PC-9 (cell line): ENCODE measurements at regions of chr20 and their contacts with region 1.

Region 1: DNA sequence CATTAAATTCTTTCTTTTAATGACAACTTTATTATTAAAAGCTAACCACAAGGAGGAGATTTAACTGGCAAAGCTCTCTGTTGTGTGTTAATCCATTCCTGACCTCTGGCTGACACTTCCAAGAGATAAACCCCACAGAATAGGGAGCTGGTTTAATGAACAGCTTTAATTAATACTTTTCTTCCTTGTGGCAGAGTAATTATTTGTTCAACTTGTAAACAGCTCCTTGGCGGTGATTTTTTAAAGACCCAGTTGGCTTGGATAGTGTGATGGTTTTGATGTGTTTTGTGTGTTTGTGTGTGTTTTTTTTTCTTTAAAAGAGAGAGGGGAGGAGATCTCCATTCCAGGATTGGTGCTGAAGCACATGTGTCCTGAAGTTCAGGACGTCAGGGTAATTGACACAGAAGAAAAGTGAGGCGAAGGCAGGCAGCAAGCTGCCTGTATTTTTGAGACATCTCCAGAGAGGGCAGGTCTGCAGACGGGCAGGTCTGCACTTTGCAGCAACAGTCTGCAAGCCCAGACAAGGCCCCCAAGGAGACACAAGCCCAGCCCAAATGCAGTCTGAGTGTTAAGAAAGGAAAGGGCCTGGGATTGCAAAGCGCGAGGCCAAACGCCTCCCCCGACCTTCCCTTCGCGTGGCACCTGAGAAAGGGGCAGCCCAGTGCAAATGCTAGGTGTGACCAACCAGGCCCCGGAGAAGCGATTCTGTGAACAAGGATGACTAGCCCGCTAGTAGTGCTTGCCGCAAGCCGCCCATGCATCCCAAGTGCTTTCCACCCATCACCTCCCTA is 230.7 kb downstream of the ZMYND8 start:
- DNase-seq: peak; percentile 14 to 54
- H3K4me3 ChIP-seq: no peak overlapping the region
- H3K27ac ChIP-seq: peak overlapping the region; percentile 61
- H3K4me1 ChIP-seq: peaks cover 23% of the 10 kb centered on the region
- H3K27me3 ChIP-seq: no peaks in the 10 kb centered on the region
- CTCF ChIP-seq: no peak

Region 2: DNA sequence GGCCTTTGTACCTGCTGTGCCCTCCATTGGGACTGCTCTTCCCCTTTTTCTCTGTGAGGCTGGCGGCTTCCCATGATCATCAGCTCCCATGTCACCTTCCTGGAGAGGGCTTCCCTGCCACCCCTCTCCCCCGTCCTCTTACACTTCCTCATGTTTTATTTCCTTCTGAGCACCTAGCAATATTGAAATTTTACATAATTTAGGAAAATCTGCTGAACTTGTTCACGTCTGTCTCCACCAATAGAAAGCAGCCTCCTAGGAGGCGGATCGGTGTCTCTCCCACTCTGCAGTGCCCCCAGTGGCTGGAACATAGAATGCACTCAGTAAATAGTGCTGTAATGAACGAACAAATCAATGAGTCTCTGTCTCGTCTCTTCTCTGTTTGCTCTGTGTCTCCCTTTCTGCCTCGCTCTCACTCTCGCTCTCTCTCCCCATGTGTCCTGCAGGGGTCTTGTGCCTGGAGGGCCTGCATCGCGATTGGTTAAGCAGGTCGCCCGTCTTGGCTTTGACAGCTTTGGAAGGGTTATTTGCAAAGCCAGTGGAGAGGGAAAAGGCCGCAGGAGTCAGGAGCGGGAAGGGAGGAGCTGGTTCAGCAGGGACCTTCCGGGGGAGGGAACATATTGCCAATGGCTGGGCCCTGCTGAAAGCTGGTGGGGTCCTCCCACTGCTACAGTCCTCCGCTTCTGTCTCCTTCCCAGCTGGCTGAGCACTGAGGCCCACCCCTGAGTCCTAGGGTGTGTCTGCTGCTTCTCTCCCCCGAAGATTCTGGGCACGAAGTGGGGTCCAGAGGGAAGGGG is 563.2 kb before region 1 on chr20:
- CTCF ChIA-PET with region 1: no interaction called
- POLR2A ChIA-PET with region 1: interaction called, 15 read pairs
- intact Hi-C with region 1: no loop called
- DNase-seq: peak; percentile 40 to 59
- H3K4me3 ChIP-seq: no peak overlapping the region
- H3K27ac ChIP-seq: no peak overlapping the region
- H3K4me1 ChIP-seq: no peaks in the 10 kb centered on the region
- H3K27me3 ChIP-seq: no peaks in the 10 kb centered on the region
- CTCF ChIP-seq: peak; percentile 96

Region 3: DNA sequence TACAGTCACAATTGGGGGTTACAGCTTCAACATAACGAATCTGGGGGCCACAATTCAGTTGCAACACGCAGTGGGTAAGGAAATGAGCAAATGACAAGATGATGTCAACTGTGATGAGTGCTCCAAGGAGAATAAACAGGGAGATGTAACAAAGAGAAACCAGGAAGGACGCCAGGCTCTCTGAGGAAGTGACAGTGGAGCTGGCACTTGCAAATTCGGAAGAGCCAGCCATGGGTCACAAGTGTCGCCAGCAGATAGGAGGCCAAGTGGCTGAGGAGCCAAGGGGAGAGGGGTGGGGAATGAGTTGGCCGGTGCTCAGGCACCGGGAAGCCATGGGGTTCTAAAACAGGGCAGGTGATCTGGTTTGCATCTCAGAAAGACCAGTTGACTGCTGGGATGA is 94.8 kb before region 1 on chr20:
- CTCF ChIA-PET with region 1: no interaction called
- POLR2A ChIA-PET with region 1: interaction called, 11 read pairs
- intact Hi-C with region 1: no loop called
- DNase-seq: no peak
- H3K4me3 ChIP-seq: no peak overlapping the region
- H3K27ac ChIP-seq: no peak overlapping the region
- H3K4me1 ChIP-seq: peaks cover 6% of the 10 kb centered on the region; the same call in 1 of the 2 replicates
- H3K27me3 ChIP-seq: peaks cover 1% of the 10 kb centered on the region
- CTCF ChIP-seq: no peak

Region 4: GRCh38 chr20:47066484-47067186 is 59.1 kb before region 1 on chr20:
- CTCF ChIA-PET with region 1: no interaction called
- POLR2A ChIA-PET with region 1: no interaction called
- intact Hi-C with region 1: no loop called
- DNase-seq: peak in 1 of 2 experiments; percentile 65
- H3K4me3 ChIP-seq: no peak overlapping the region
- H3K27ac ChIP-seq: no peak overlapping the region
- H3K4me1 ChIP-seq: no peaks in the 10 kb centered on the region
- H3K27me3 ChIP-seq: no peaks in the 10 kb centered on the region
- CTCF ChIP-seq: no peak

Region 5: GRCh38 chr20:47150403-47151152 is 24.8 kb after region 1 on chr20:
- CTCF ChIA-PET with region 1: no interaction called
- POLR2A ChIA-PET with region 1: no interaction called
- intact Hi-C with region 1: loop called (anchors 2 kb)
- DNase-seq: peak; percentile 68 to 69
- H3K4me3 ChIP-seq: no peak overlapping the region
- H3K27ac ChIP-seq: no peak overlapping the region
- H3K4me1 ChIP-seq: peaks cover 18% of the 10 kb centered on the region
- H3K27me3 ChIP-seq: no peaks in the 10 kb centered on the region
- CTCF ChIP-seq: peak; percentile 86

Region 6: DNA sequence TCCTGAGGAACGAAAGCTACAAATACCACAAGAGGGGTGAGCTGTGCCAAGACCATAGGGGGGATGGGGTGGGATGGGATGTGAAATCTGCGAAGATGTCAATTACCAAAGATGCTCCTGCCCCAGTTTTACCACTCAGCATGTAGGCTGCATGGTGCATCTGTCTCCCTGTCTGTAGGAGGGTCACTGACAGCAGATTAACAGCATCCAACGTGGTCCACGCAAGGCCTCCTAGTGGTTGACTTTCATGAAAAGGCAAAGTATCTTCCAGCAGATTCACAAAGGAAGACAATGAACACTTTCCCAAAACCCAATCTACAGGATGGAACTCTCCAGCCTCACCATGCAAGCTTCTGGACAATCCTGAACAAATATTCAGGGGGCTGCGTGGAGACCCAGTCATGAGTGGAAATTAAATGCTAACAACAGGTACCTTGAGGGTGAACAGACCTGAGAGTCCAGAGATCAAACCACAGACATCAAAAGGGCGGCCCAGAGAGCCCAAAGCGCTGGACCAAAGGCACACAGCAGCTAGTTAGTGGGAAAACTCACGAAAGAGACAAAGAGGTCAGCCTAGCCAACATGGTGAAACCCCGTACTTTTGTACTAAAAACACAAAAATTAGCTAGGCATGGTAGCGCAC is 186.4 kb after region 1 on chr20:
- CTCF ChIA-PET with region 1: no interaction called
- POLR2A ChIA-PET with region 1: interaction called, 10 read pairs
- intact Hi-C with region 1: no loop called
- DNase-seq: no peak
- H3K4me3 ChIP-seq: no peak overlapping the region
- H3K27ac ChIP-seq: no peak overlapping the region
- H3K4me1 ChIP-seq: peaks cover 33% of the 10 kb centered on the region
- H3K27me3 ChIP-seq: no peaks in the 10 kb centered on the region
- CTCF ChIP-seq: no peak

Region 7: DNA sequence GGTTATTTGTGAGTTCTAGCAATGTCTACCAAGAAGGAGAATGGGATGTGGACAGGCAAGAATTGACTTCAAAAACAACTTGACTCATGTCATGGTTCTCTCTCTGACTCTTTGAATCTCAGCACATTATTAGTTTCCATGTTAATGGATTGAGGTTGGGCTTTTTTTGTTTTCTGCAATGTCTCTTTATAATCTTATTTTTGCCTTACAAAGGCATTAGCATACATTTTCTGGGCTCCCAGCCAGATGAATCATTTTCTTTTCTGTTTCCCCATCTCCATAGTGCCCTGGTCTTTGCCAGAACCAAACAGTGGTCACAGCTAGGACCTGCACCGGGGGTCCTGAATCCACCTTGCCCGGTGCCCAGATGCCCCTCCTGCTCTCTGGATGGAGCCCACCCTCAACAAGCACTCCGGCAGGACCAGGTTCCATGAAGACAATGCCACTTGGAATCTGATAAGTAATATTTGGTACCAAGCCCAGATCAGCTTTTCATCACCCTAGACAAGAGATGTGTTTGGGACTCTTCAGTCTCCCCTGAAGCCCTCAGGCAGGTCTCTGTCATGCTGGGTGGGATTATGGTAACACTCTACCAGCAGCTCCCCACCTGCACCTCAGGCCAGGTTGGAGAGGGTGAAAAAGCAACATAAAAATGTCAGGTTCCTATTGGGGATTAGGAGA is 926.2 kb after region 1 on chr20:
- CTCF ChIA-PET with region 1: no interaction called
- POLR2A ChIA-PET with region 1: no interaction called
- intact Hi-C with region 1: no loop called
- DNase-seq: peak; percentile 78 to 87
- H3K4me3 ChIP-seq: no peak overlapping the region
- H3K27ac ChIP-seq: peak overlapping the region; percentile 52
- H3K4me1 ChIP-seq: peaks cover 22% of the 10 kb centered on the region
- H3K27me3 ChIP-seq: no peaks in the 10 kb centered on the region
- CTCF ChIP-seq: no peak